Head of caudate nucleus (tissue), 42 donors: ENCODE measurements at regions of chr13 and their contacts with region 1.

Region 1: DNA sequence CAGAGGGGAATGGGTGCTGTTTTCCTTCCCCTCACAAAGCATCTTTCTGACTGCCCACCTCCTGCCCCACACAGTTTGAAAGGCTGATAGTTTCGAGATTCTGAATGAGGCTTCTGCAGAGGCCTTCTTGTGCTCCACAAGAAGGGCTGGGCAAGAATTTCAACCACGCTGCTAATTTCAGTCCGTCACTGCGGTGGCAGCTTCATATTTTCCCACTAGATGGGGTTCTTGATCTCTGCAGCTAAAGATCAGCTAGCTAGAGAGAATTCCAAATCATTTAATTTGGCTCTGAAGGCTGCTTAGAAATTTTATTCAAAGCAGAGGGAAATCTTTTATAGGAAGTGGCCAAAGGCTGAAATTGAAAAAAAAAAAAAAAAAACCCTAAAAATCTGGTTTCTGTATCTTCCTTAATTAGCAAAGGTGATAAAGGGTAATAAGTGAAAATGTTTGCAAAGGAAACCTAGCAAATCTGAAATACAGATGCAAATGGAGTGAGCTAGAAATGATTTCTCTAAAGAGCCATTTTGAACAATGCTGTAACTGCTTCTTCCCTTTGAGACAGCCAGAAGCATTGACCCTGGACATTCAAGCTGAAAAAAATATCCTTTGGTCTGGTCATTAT is 38.0 kb upstream of the C13orf42 start:
- DNase-seq: peak; percentile 20 to 88 (median 68)

Region 2: DNA sequence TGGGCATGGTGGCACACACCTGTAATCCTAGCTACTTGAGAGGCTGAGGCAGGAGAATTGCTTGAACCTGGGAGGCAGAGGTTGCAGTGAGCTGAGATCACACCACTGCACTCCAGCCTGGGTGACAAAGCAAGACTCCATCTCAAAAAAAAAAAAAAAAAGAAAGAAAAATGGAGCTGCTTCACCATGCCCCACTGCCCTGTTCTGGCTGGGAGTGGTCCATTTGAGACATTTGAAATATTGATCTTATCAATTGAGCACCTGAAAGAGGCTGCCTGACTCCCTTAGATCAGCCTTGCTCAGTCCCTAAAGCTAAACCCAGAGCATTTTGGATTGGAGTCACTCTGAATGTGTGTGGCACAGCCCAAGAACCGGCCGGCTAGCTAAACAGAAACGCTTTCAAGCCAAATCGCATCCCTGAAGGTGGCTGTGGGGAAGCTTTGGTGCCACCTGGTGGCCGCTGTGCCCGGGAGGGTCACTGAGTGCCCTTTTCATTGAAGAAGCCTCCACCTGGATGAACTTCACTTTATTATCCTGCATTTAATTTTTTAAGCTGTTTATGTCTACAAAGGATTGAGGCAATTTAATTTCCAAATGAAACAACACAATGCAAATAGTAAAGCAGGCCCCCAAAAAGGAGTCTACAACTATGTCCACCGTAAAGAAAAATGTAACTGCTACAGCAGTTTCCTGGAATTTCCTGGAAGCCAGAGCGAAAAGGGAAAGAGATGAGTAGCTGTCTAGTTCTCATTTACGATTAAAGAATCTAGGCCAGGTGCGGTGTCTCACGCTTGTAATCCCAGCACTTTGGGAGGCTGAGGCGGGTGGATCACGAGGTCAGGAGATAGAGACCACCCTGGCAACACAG is 137.3 kb after region 1 on chr13:
- intact Hi-C with region 1: loop called (anchors 2 kb)
- DNase-seq: peak; percentile 72 to 96 (median 90)